PC-9 (cell line): ENCODE measurements at regions of chr17 and their contacts with region 1.

Region 1: GRCh38 chr17:6753006-6753445 is 2.8 kb upstream of the XAF1 start:
- DNase-seq: peak in 1 of 2 experiments; percentile 60
- H3K4me3 ChIP-seq: peak overlapping the region; percentile 10; the same call in 1 of the 2 replicates
- H3K27ac ChIP-seq: peak overlapping the region; percentile 94
- H3K4me1 ChIP-seq: peaks cover 22% of the 10 kb centered on the region
- H3K27me3 ChIP-seq: no peaks in the 10 kb centered on the region
- CTCF ChIP-seq: no peak

Region 2: DNA sequence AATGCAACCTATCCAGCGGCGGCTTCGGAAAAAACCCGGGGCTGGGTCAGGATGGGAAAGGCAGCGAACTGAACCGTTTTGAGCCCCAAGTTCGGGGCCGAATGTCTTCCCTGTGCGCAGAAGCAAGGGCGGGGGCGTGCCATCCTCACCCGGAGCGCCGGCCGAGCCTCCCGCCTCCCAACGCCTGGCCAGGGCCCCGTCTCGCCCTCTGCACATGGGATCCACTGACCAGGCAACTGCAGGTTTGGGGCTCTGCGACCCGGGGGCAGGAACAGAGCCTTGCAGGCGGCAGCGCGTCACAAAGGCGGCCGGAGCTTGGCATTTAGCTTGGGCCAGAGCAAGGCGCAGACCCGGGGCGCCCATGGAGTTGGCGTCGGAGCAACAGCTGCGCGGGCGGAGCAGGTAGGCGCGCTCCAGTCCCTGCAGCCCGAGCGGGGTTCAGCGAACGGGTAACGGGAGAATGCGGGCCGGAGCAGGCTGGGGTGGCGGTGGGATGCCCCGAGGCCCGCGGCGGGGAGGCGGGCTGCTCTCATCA is 22.9 kb after region 1 on chr17 and contains the start of gene FBXO39:
- CTCF ChIA-PET with region 1: no interaction called
- POLR2A ChIA-PET with region 1: no interaction called
- intact Hi-C with region 1: no loop called
- DNase-seq: no peak
- H3K4me3 ChIP-seq: no peak within 1 kb of the TSS
- H3K27ac ChIP-seq: no peak within 1 kb of the TSS
- H3K4me1 ChIP-seq: no peaks in the 10 kb centered on the region
- H3K27me3 ChIP-seq: no peaks in the 10 kb centered on the region
- CTCF ChIP-seq: no peak
- total RNA-seq, gene FBXO39: not detected in 2 replicates

Region 3: DNA sequence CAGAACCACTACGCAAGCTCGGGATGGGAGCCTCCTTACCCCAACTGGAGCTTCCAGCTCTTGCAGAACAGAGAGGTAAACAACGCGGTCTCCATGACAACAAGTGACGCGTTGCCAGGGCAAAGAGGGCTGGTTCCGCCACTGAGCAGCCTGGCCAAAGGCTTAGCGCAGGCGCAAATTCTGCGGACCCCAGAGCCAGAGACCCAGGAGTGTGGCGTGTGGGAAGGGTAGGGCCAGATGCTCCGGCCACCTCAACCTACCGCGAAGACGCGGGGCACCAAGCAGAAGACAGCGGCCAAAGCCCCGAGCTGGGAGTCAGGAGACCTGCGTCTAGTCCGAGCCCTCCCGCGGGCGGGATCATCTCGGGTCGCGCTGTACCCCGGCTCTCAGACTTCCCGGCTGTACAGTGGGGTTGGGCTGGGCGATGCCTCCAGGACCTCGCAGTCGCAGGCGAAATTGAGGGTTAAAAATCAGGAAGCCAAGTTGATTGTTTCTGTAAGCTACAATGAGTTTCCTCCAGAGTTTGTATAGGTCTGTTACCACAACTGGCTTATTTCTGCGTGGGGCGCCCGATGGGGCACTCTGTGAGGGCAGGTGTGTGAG is 78.7 kb after region 1 on chr17 and contains the start of gene TEKT1:
- CTCF ChIA-PET with region 1: no interaction called
- POLR2A ChIA-PET with region 1: no interaction called
- intact Hi-C with region 1: loop called (anchors 5 kb)
- DNase-seq: peak; percentile 73 to 85
- H3K4me3 ChIP-seq: peak within 1 kb of the TSS; percentile 62
- H3K27ac ChIP-seq: no peak within 1 kb of the TSS
- H3K4me1 ChIP-seq: peaks cover 5% of the 10 kb centered on the region; the same call in 1 of the 2 replicates
- H3K27me3 ChIP-seq: no peaks in the 10 kb centered on the region
- CTCF ChIP-seq: no peak
- total RNA-seq, gene TEKT1: 0.50 and 0.61 TPM in 2 replicates

Region 4: DNA sequence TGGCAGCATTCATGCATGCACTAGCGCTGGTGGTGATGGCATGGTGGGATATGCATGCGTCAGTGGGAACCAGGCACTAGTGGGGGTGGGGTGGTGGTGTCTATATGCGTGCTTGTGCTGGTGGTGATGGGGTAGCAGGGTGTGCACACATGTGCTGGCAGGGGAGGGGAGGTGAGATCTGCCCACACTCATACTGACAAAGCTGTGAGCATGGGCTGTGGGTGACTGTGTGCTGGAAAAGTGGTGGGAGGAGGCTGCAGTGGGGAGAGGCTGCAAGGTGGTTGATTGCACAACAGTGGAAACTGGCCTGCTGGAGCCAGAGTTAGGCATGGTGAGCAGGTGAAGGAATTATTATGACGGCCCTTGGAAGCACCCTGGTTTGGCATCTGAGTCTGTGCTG is 109.8 kb after region 1 on chr17:
- CTCF ChIA-PET with region 1: no interaction called
- POLR2A ChIA-PET with region 1: no interaction called
- intact Hi-C with region 1: no loop called
- DNase-seq: no peak
- H3K4me3 ChIP-seq: no peak overlapping the region
- H3K27ac ChIP-seq: no peak overlapping the region
- H3K4me1 ChIP-seq: peaks cover 7% of the 10 kb centered on the region
- H3K27me3 ChIP-seq: no peaks in the 10 kb centered on the region
- CTCF ChIP-seq: no peak

Region 5: GRCh38 chr17:7095625-7096024 is 342.6 kb after region 1 on chr17:
- CTCF ChIA-PET with region 1: no interaction called
- POLR2A ChIA-PET with region 1: no interaction called
- intact Hi-C with region 1: no loop called
- DNase-seq: no peak
- H3K4me3 ChIP-seq: no peak overlapping the region
- H3K27ac ChIP-seq: no peak overlapping the region
- H3K4me1 ChIP-seq: peaks cover 5% of the 10 kb centered on the region; the same call in 1 of the 2 replicates
- H3K27me3 ChIP-seq: peaks cover 30% of the 10 kb centered on the region
- CTCF ChIP-seq: no peak